ENCODE measurements at regions of chr10 and their contacts with region 1.

Region 1: DNA sequence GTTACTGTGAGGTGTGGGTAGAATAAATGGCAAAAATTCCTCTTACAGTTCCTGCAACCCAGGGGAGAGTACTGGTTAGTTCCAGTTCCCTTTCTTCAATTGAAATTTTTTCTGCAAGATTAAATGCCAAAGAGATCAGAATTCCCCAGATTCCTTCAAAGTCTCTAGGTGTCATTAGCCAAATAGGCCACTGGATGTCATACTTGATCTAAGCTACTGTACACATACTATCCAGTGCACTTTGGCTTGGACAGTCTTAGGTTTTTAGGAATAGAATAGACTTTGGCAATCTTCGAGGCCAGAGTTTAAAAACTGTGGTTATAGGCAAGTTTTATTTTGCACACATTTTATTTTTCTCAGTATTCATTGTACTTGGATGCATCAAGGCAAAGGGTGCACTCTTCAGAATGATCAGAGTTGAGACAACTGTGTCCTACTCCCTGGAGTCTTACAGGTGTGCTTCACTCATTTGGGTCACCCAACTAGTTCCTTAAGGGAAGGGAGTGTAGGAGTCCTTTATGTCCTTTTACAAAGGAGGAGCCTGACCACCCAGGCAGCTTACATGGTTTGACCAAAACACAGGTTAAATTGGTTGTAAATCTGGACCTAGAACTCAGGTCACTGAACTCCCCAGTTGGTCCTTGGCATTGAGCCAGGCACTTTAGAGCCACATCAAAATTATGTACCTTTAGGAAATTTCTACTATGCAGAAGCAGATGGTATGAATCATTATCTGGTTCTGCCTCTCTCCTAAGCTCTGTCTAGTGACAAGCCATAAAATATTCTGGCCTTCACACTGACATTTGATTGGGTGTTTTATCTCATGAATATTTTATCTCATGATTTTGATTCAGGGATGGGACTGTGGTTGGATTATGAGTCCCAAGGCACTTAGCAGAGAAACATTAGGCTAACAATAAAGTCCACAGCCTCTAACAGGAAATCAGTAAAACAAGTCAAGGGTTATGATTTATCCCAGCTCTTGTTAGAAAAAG is 49.5 kb downstream of the ASAH2B start:
- DNase-seq: peak; percentile 11
- H3K4me3 Mint-ChIP-seq: no peak overlapping the region
- H3K27ac Mint-ChIP-seq: no peak overlapping the region
- H3K4me1 Mint-ChIP-seq: peaks cover 8% of the 10 kb centered on the region
- H3K27me3 Mint-ChIP-seq: peaks cover 16% of the 10 kb centered on the region
- CTCF ChIP-seq: peak; percentile 52

Region 2: DNA sequence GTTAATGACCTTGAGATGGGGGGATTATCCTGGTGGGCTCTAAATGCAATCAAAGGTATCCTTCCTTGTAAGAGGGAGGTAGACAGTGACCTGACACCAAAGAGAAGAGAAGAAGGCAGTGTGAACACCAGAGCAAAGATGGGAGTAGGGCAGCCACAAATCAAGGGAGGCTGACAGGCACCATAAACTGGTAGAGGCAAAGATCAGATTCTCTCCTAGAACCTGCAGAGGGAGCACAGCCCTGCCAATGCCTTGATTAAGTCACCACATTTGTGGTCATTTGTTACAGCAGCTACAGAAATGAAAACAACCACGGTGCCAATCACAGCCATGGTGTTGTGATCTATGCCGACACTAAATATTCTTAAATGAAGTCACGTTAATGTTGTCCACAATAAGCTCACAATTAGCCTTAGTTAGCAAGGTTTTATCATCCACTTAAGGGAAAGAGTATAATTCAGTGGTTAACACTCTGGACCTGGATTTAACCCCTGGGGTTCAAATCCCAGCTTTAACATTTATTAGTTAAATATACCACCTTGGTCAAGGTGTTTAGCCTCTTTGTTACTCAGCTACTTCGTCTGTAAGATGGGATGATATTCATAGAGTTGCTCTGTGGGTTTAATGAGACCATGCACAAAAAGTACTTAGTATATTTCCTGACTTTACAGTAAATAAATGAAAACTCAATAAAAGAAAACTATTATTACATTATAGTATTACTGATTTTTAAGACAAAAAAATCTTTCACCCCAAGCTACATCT is 236.3 kb before region 1 on chr10:
- CTCF ChIA-PET with region 1: no interaction called
- intact Hi-C with region 1: no loop called
- DNase-seq: no peak
- H3K4me3 Mint-ChIP-seq: no peak overlapping the region
- H3K27ac Mint-ChIP-seq: no peak overlapping the region
- H3K4me1 Mint-ChIP-seq: peaks cover 30% of the 10 kb centered on the region
- H3K27me3 Mint-ChIP-seq: no peaks in the 10 kb centered on the region
- CTCF ChIP-seq: no peak

Region 3: GRCh38 chr10:50846753-50847152 is 57.5 kb after region 1 on chr10:
- CTCF ChIA-PET with region 1: no interaction called
- intact Hi-C with region 1: no loop called
- DNase-seq: no peak
- H3K4me3 Mint-ChIP-seq: no peak overlapping the region
- H3K27ac Mint-ChIP-seq: no peak overlapping the region
- H3K4me1 Mint-ChIP-seq: peaks cover 13% of the 10 kb centered on the region
- H3K27me3 Mint-ChIP-seq: no peaks in the 10 kb centered on the region
- CTCF ChIP-seq: no peak

Region 4: GRCh38 chr10:50896721-50897120 is 107.5 kb after region 1 on chr10:
- CTCF ChIA-PET with region 1: interaction called, 5 read pairs
- intact Hi-C with region 1: loop called (anchors 1 kb)
- DNase-seq: no peak
- H3K4me3 Mint-ChIP-seq: no peak overlapping the region
- H3K27ac Mint-ChIP-seq: no peak overlapping the region
- H3K4me1 Mint-ChIP-seq: no peaks in the 10 kb centered on the region
- H3K27me3 Mint-ChIP-seq: no peaks in the 10 kb centered on the region
- CTCF ChIP-seq: no peak

Region 5: GRCh38 chr10:50929670-50930069 is 140.4 kb after region 1 on chr10:
- CTCF ChIA-PET with region 1: no interaction called
- intact Hi-C with region 1: loop called (anchors 2 kb)
- DNase-seq: no peak
- H3K4me3 Mint-ChIP-seq: no peak overlapping the region
- H3K27ac Mint-ChIP-seq: no peak overlapping the region
- H3K4me1 Mint-ChIP-seq: no peaks in the 10 kb centered on the region
- H3K27me3 Mint-ChIP-seq: peaks cover 27% of the 10 kb centered on the region
- CTCF ChIP-seq: no peak